Cardiac septum (tissue), 1 donor: ENCODE measurements at regions of chr2 and their contacts with region 1.

Region 1: DNA sequence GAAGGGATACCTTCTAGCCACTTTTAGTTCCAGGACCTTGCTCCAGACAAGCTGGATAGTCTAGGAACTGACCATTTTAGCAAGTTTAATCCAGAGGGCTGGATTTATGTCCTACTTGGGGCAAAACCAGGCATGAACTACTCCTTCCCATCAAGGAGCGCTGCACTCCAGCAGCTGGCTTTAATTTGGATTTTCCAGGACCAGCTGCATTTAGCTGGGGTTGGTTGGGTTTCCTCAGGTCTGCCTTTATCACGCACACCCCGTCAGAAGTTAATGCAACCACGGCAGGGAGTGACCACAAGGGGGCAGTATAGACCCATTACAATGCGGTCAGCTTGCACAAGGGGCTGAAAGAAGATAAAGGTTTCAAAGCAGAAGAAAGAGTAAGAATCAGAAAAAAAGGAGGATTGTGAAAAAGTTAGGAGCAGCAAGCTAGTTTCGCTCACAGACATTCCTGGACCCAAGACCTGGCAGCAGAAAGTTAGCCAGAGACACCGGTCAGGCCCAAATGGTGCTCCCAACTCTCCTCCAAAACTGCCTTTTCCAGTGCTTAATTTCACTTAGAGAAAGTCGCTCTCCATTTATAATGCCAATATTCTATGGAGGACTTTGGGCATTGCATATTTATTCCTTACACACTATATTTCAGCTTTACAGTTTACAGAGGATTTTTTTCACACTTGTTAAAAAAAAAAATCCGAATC is 40.1 kb downstream of the SLC4A1AP start:
- DNase-seq: peak; percentile 90

Region 2: DNA sequence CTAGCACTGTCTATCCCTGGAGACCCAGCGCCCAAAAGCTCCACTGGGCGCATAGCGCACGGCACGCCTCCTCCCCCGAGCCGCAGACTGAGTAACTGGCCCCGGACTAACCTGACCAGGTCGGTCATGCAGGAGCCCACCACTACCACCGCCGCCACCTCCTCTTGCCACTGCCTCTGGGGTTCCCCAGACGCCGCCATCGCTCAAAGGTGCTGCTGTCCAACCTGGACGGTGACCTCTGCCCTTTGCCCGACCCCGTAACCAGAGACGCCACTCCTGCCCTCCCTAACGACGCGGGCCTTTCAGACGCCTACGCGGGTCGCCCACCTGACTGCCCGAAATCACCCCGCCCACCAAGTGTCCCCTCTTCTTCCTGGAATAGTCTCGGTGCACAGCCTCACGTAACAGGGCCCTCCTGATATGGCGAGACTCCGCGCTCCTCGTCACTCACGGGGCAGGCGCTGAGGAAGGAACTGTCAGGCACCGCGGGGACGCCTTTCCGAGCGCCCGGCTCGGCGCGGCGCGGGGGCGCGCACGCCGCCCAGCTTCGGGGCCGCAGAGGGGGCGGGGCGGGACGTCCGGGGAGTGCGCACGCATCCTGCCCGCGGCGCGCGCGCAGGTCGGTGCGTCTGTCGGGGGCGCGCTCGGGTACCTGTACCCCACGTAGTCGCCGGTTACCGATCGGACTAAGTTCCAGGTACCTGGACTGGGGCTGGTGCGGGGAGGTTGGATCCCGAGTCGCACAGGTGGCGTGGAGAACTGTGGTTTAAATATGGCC is 186.5 kb after region 1 on chr2 and contains the starts of genes BABAM2 and RBKS:
- intact Hi-C with region 1: loop called (anchors 5 kb)
- DNase-seq: peak; percentile 95
- total RNA-seq, gene BABAM2: 63.4 TPM
- total RNA-seq, gene RBKS: 3.9 TPM

Region 3: GRCh38 chr2:28452534-28453081 is 748.8 kb after region 1 on chr2:
- intact Hi-C with region 1: loop called (anchors 5 kb)
- DNase-seq: peak; percentile 92